ENCODE measurements at regions of chr5 and their contacts with region 1.

Region 1: DNA sequence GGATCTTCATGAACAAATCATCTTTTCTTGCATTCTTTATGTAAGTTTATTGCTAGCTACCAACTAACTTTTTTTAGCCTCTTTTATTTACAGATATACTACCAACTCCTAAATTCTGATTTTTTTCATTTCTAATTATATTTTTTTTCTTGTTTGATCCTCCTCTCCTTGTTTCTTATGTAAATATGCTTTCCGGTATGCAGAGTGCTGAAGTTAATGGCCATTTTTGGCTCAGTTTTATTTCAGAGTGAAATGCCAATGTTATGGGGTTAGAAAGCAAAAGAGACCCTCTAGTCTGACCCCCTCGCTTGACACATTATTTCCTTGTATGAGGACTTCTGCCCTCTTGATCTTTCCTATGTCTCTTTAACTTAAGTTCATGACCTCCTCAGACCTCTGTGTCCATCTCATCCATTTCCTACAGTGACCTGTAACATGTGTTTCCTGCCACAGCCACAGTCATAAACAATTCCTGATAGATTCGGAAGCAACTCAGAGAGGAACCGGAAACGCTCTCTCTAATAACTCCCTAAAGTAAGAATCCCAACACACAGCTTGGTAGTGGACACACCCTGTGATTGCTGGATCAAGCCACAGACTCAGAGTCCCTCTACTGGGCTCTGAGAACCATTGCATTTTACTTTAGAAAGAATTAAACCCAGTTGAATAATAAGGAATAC is 42.9 kb upstream of the AFAP1L1 start:
- DNase-seq: no peak

Region 2: DNA sequence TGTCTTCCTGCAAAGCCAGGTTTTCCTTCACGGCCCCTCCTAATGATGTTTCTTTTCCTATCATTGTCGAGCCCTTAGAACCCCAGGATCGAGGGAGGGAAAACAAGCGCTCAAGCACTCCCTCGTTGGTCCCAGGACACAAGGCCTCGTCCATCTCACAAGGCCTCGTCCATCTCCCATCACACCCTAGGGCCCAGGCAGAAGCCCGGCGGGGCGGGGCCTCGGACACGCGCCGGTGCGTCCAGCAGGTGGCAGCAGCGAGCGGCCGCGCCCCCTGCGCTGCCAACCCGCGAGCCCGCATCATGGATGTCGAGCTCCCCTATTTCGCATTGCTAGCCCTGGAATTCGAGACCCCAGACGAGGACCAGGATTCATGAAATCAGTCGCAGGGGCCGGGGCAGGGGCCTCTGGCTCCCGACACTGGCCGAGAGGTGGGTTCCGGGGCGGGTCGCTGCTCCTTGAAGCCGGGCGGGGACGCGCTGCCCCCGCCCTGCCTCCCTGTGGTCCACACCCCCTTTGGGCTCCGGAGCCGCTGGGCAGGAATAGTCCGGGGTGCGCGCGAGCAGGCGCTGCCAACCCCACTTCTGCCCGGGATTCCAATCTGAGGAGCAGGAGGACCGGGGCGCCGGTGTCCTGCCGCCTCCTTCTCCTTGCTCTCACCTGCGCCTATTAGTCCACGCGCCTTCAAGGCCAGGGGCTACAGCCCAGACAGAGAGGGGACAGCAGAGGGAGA is 87.4 kb before region 1 on chr5 and contains the start of gene ABLIM3:
- intact Hi-C with region 1: loop called (anchors 5 kb)
- DNase-seq: peak; percentile 92
- total RNA-seq, gene ABLIM3: 31.4 to 45.4 TPM

Region 3: GRCh38 chr5:150398722-150399523 is 1170.2 kb after region 1 on chr5:
- intact Hi-C with region 1: no loop called
- DNase-seq: no peak